ENCODE measurements at regions of chr13 and their contacts with region 1.

Region 1: DNA sequence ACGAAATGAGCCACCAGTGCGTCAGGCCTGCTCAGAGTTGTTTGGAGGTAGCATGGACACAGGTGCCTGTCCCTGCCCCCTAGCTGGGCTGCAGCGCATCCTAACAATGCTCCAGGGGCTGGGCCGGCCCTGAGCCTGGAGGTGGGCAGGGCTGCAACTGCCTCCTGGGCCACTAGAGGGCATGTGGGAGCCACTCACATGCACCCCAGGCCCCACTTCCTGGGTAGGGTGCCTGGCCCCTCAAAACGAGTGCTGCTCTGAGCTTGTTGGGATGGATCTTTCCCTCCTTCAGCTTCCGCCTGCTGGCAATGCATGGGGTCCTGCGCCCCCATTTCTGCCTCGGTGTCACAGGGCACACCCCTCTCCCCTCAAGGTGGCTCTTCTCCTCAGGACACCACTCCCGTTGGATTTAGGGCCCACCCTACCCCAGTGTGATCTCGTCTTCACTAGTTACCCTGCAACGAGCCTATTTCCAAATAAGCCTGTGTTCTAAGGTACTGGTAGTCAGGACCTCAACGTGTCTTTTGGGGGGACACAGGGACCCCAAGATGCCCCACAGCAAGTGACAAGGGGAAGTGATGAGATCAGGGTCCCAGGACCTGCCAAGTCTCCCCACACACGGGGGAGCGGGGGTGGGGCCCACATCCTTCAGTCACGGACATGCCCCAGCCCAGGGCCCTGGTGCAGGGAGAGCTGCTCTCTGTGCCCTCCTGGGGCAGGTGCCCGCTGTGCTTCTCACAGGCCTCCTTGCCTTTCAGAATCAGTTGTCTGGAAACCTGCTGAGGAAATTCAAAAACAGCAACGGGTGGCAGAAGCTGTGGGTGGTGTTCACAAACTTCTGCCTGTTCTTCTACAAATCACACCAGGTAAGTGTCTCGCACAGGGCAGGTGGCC is 131.3 kb downstream of the STK24 start:
- DNase-seq: peak; percentile 60 to 75
- ATAC-seq: peak; percentile 73 to 89 (median 81)
- H3K4me3 ChIP-seq: peak overlapping the region in 1 of 10 donors; percentile 4
- H3K27ac ChIP-seq: peak overlapping the region in 3 of 10 donors; percentile 19 to 46 (median 41)
- H3K4me1 ChIP-seq: peaks cover 4 to 35% (median 28%) of the 10 kb centered on the region in 9 donors
- H3K27me3 ChIP-seq: no peaks in the 10 kb centered on the region
- CTCF ChIP-seq: peak; percentile 90 to 99 (median 97)

Region 2: GRCh38 chr13:98484289-98485219 is 39.0 kb after region 1 on chr13:
- intact Hi-C with region 1: no loop called
- DNase-seq: peak; percentile 37 to 72
- ATAC-seq: peak; percentile 46 to 78 (median 65)
- H3K4me3 ChIP-seq: peak overlapping the region in 1 of 10 donors; percentile 13
- H3K27ac ChIP-seq: peak overlapping the region; percentile 4 to 83 (median 66)
- H3K4me1 ChIP-seq: peaks cover 28 to 99% (median 92%) of the 10 kb centered on the region in 9 donors
- H3K27me3 ChIP-seq: no peaks in the 10 kb centered on the region
- CTCF ChIP-seq: no peak

Region 3: DNA sequence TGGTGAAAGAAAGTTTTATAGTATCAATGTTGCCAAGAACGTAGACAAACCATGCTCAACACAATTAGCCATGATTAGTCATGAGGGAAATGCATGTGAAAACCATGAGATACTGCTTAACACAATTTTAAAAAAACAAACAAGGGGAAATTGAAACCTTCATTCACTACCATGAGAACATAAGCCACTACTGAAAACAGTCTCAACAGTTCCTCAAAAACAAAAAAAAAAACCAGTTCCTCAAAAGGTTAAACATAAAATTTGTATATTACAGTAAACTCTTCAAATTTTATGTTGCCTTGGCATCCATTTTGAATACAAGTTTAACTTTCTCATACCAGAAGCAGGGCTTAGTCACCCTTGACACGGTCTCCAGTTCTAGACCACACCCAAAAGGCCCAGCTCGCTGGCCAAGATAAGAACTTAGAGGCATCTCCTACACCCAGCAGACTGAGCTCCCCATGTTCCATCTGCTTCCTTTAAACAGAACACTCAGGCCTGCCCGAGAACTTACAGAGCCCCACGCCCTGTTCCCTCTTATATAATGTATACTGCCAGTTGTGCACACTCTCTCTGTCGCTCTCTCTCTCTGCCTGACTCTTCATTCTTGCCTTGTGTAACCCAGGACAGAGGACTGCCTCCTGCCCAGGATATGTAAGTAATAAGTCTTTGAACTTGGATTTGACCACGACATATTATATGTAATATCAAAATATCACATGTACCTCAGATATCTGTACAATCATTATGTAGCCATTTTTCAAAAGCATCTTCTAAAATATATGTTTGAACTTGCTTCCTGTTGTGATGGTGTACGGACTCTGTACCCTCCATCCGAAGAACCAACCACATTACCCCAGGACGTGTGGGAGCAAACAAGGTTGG is 63.9 kb after region 1 on chr13:
- intact Hi-C with region 1: no loop called
- DNase-seq: peak in 1 of 2 donors; percentile 44
- ATAC-seq: peak in 7 of 8 donors; percentile 40 to 83 (median 73)
- H3K4me3 ChIP-seq: no peak overlapping the region
- H3K27ac ChIP-seq: peak overlapping the region in 9 of 10 donors; percentile 3 to 85 (median 46)
- H3K4me1 ChIP-seq: peaks cover 26 to 84% (median 73%) of the 10 kb centered on the region in 9 donors
- H3K27me3 ChIP-seq: no peaks in the 10 kb centered on the region
- CTCF ChIP-seq: no peak

Region 4: GRCh38 chr13:98653463-98653985 is 207.9 kb after region 1 on chr13:
- intact Hi-C with region 1: loop called (anchors 1 to 5 kb)
- DNase-seq: peak; percentile 64 to 68
- ATAC-seq: peak; percentile 78 to 90 (median 87)
- H3K4me3 ChIP-seq: no peak overlapping the region
- H3K27ac ChIP-seq: no peak overlapping the region
- H3K4me1 ChIP-seq: peaks cover 0 to 19% (median 0%) of the 10 kb centered on the region in 9 donors
- H3K27me3 ChIP-seq: peaks cover 0 to 3% (median 0%) of the 10 kb centered on the region in 7 donors
- CTCF ChIP-seq: peak; percentile 86 to 93 (median 89)

Region 5: GRCh38 chr13:98664039-98664438 is 218.5 kb after region 1 on chr13:
- intact Hi-C with region 1: loop called in 1 of 10 experiments (anchors 5 kb)
- DNase-seq: no peak
- ATAC-seq: no peak
- H3K4me3 ChIP-seq: no peak overlapping the region
- H3K27ac ChIP-seq: no peak overlapping the region
- H3K4me1 ChIP-seq: no peaks in the 10 kb centered on the region
- H3K27me3 ChIP-seq: no peaks in the 10 kb centered on the region
- CTCF ChIP-seq: no peak

Region 6: GRCh38 chr13:98672944-98673545 is 227.5 kb after region 1 on chr13:
- intact Hi-C with region 1: loop called in 6 of 10 experiments (anchors 2 to 5 kb)
- DNase-seq: peak; percentile 45 to 72
- ATAC-seq: peak; percentile 89 to 96 (median 92)
- H3K4me3 ChIP-seq: peak overlapping the region in 1 of 10 donors; percentile 9
- H3K27ac ChIP-seq: peak overlapping the region in 2 of 10 donors; percentile 20 to 29
- H3K4me1 ChIP-seq: peaks cover 0 to 18% (median 11%) of the 10 kb centered on the region in 9 donors
- H3K27me3 ChIP-seq: no peaks in the 10 kb centered on the region
- CTCF ChIP-seq: peak; percentile 75 to 95 (median 88)

Measured in heart right ventricle (tissue), 16 donors.